Calu3 (cell line): ENCODE measurements at regions of chr7 and their contacts with region 1.

Region 1: DNA sequence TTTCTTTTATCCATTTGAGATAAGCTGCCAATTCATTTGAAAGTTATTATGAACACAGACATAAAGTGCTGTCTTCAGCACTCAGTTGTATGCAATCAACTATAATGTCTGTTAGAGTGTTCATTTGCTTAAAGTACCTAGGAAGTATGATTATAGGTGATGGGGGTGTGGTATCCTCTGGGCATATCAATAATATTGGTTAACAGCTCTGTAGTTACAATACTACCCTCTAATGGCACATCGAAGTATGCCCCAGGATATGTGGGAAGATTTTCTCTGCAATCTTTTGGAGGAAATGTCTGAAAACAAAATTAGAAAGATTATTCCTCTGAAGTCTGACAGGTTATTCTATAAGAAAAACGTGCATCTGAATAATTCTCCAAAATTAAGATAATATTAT is 429.7 kb downstream of the ARL4A start:
- DNase-seq: peak; percentile 20
- H3K4me3 Mint-ChIP-seq: no peak overlapping the region
- H3K27ac Mint-ChIP-seq: no peak overlapping the region
- H3K4me1 Mint-ChIP-seq: peaks cover 16% of the 10 kb centered on the region
- H3K27me3 Mint-ChIP-seq: no peaks in the 10 kb centered on the region
- CTCF ChIP-seq: peak; percentile 63

Region 2: DNA sequence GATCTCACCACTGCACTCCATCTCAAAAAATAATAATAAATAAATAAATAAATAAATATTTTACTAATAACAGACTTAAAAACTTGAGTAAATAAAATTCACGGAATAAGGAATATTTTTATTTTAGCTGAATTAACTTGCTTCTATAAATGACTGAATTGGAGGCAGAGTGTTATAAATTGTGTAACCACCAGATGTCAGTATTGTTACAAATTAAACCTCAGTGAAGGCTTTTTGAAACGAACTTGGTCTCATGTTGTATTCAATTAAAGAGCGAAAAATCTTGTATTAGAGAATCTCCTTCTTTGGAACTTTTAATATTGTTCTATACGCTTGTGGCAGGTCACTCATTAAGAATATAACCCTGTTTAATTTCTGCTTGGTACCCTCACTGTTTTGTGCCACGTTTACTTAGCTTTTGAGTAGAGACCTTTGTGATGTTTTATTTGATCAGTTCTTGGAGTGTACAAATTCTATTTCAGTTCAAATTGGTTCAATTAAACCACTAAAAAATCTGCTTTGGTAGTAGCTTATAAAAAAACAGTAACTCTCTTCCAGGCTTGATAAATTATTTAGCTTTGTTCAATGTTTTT is 592.2 kb before region 1 on chr7:
- CTCF ChIA-PET with region 1: no interaction called
- intact Hi-C with region 1: loop called (anchors 10 kb)
- DNase-seq: no peak
- H3K4me3 Mint-ChIP-seq: no peak overlapping the region
- H3K27ac Mint-ChIP-seq: peak overlapping the region; percentile 45
- H3K4me1 Mint-ChIP-seq: no peaks in the 10 kb centered on the region
- H3K27me3 Mint-ChIP-seq: no peaks in the 10 kb centered on the region
- CTCF ChIP-seq: peak; percentile 59

Region 3: GRCh38 chr7:12802098-12802497 is 315.0 kb before region 1 on chr7:
- CTCF ChIA-PET with region 1: no interaction called
- intact Hi-C with region 1: loop called (anchors 10 kb)
- DNase-seq: peak; percentile 18
- H3K4me3 Mint-ChIP-seq: peak overlapping the region; percentile 56
- H3K27ac Mint-ChIP-seq: peak overlapping the region; percentile 92
- H3K4me1 Mint-ChIP-seq: peaks cover 43% of the 10 kb centered on the region
- H3K27me3 Mint-ChIP-seq: no peaks in the 10 kb centered on the region
- CTCF ChIP-seq: no peak

Region 4: DNA sequence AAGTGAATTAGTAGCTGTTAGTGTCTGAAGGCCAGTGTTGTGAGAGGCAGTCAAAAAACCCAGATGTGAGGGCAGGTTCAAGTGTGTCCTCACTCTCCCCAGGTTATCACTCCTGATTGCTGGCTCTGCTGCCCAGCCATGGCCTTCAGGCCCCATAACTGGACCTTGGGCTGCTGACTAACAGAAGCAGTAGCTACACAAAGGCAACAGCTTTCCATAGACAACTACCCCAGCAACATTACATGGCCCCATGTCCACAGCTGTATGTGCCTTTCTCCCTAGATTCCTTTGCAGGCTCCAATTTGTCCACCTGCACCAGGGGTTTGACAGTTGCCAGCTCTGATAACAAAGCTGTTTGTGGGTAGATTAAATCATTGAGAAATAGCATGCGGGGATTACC is 131.9 kb before region 1 on chr7:
- CTCF ChIA-PET with region 1: no interaction called
- intact Hi-C with region 1: loop called (anchors 5 kb)
- DNase-seq: no peak
- H3K4me3 Mint-ChIP-seq: no peak overlapping the region
- H3K27ac Mint-ChIP-seq: no peak overlapping the region
- H3K4me1 Mint-ChIP-seq: no peaks in the 10 kb centered on the region
- H3K27me3 Mint-ChIP-seq: no peaks in the 10 kb centered on the region
- CTCF ChIP-seq: no peak

Region 5: GRCh38 chr7:13189668-13190067 is 72.6 kb after region 1 on chr7:
- CTCF ChIA-PET with region 1: no interaction called
- intact Hi-C with region 1: no loop called
- DNase-seq: no peak
- H3K4me3 Mint-ChIP-seq: no peak overlapping the region
- H3K27ac Mint-ChIP-seq: no peak overlapping the region
- H3K4me1 Mint-ChIP-seq: peaks cover 25% of the 10 kb centered on the region
- H3K27me3 Mint-ChIP-seq: no peaks in the 10 kb centered on the region
- CTCF ChIP-seq: no peak

Region 6: DNA sequence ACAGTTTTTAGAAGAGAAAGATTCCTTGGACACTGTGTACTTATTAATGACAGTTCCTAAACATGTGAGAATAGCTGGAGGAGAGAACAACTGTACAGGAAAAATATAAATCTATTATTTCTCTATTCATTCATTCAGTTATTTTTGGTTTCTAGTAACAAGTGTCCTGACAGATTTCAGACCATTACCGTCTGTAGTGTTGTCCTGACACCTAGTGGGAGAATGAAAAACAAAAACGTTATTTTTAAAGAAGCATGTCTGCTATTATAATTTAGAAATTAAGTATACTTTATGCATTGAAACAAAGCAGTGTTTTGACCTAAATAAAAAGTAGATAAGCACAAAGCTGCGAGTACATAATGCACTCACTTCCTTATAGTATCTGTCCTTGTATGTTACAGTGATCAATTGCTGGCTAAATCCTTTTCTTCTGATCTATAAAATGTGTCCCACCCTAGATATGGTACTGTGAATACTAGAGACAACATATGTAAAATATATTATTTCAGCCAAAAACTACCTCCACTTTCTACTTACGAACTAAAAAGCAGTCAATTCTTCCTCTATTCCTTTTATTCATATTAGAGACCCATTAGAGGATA is 145.9 kb after region 1 on chr7:
- CTCF ChIA-PET with region 1: interaction called, 5 read pairs
- intact Hi-C with region 1: loop called (anchors 10 kb)
- DNase-seq: peak; percentile 25
- H3K4me3 Mint-ChIP-seq: no peak overlapping the region
- H3K27ac Mint-ChIP-seq: no peak overlapping the region
- H3K4me1 Mint-ChIP-seq: no peaks in the 10 kb centered on the region
- H3K27me3 Mint-ChIP-seq: peaks cover 12% of the 10 kb centered on the region
- CTCF ChIP-seq: peak; percentile 74